Mammary epithelial cell (primary cell): ENCODE measurements at regions of chr17 and their contacts with region 1.

Region 1: GRCh38 chr17:28449861-28450260 is 23.6 kb upstream of the SLC13A2 start:
- DNase-seq: no peak
- H3K4me3 ChIP-seq: no peak overlapping the region
- H3K27ac ChIP-seq: no peak overlapping the region
- H3K4me1 ChIP-seq: peaks cover 11% of the 10 kb centered on the region
- H3K27me3 ChIP-seq: no peaks in the 10 kb centered on the region
- CTCF ChIP-seq: no peak

Region 2: DNA sequence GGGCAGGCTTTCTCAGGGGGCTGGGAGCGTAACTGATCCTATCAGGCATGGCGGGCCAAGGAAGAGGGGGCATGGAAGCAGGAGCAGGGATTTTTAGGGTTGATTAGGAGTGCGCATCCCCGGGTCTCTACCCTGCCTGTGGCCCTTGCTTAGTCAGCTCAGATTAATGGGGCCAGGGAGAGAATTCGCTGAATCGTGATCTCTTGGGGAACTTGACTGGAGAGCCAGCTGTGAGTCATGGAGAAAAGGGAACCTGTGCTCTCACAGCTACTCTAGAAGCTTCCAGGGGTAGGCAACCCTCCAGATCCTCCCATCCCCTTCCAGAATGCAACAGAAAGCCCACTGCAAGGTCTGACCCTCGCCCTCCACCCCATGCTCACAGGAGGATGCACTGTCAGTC is 59.9 kb after region 1 on chr17:
- CTCF ChIA-PET with region 1: no interaction called
- dilution Hi-C with region 1: loop called (anchors 5 kb)
- in situ Hi-C with region 1: no loop called
- intact Hi-C with region 1: no loop called
- DNase-seq: no peak
- H3K4me3 ChIP-seq: no peak overlapping the region
- H3K27ac ChIP-seq: no peak overlapping the region
- H3K4me1 ChIP-seq: peaks cover 18% of the 10 kb centered on the region
- H3K27me3 ChIP-seq: no peaks in the 10 kb centered on the region
- CTCF ChIP-seq: no peak